Psoas muscle (tissue), 8 donors: ENCODE measurements at regions of chr16 and their contacts with region 1.

Region 1: DNA sequence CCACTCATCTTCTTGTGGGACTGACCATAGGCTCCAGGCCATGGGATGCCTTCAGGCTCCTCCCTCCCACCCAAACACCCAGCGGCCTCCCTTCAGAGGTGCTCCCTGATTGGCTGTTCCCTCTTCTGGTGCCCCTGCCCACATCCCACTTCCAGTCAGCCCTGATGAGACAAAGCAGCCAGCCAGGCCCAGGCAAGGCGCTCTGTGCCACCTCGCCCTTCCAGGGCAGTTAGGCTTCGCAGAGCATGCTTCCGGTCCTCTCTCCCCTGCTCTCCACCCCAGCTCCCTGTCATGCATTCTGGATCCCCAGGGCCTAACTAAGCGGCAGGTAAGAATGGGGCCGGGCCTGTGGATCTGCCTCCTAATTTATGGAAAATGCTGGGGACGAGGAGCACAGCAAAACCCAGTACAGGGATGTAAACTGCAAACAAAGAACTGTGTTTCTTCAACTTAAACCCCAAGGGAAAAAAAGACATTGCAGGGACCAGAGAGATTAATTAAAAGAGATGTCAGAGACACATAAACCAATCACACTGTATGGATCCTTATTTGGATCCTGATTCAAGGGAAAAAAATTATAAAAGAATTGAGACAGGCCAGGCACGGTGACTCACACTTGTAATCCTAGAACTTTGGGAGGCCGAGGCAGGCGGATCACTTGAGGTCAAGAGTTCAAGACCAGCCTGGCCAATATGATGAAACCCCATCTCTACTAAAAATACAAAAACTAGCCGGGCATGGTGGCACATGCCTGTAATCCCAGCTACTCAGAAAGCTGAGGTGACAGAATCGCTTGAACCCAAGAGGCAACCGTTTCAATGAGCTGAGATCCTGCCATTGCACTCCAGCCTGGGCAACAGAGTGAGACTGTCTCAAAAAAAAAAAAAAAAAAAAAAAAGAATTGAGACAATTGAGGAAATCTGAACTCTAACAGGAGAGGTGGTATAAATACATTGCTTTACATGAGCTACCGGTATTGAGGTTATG is 26.0 kb downstream of the ZDHHC7 start:
- DNase-seq: peak; percentile 46 to 81
- ATAC-seq: peak; percentile 68 to 82 (median 79)
- H3K4me3 ChIP-seq: no peak overlapping the region
- H3K27ac ChIP-seq: peak overlapping the region; percentile 86
- H3K4me1 ChIP-seq: peaks cover 50% of the 10 kb centered on the region
- H3K27me3 ChIP-seq: no peaks in the 10 kb centered on the region
- CTCF ChIP-seq: no peak

Region 2: GRCh38 chr16:84851192-84852127 is 133.9 kb before region 1 on chr16:
- intact Hi-C with region 1: no loop called
- DNase-seq: peak in 1 of 2 donors; percentile 38
- ATAC-seq: no peak
- H3K4me3 ChIP-seq: no peak overlapping the region
- H3K27ac ChIP-seq: no peak overlapping the region
- H3K4me1 ChIP-seq: no peaks in the 10 kb centered on the region
- H3K27me3 ChIP-seq: peaks cover 0 to 6% (median 0%) of the 10 kb centered on the region in 3 donors
- CTCF ChIP-seq: no peak

Region 3: GRCh38 chr16:85086347-85087291 is 101.2 kb after region 1 on chr16:
- intact Hi-C with region 1: loop called (anchors 2 to 10 kb)
- DNase-seq: peak; percentile 75 to 81
- ATAC-seq: peak; percentile 49 to 76 (median 72)
- H3K4me3 ChIP-seq: no peak overlapping the region
- H3K27ac ChIP-seq: no peak overlapping the region
- H3K4me1 ChIP-seq: no peaks in the 10 kb centered on the region
- H3K27me3 ChIP-seq: no peaks in the 10 kb centered on the region
- CTCF ChIP-seq: peak; percentile 56

Region 4: DNA sequence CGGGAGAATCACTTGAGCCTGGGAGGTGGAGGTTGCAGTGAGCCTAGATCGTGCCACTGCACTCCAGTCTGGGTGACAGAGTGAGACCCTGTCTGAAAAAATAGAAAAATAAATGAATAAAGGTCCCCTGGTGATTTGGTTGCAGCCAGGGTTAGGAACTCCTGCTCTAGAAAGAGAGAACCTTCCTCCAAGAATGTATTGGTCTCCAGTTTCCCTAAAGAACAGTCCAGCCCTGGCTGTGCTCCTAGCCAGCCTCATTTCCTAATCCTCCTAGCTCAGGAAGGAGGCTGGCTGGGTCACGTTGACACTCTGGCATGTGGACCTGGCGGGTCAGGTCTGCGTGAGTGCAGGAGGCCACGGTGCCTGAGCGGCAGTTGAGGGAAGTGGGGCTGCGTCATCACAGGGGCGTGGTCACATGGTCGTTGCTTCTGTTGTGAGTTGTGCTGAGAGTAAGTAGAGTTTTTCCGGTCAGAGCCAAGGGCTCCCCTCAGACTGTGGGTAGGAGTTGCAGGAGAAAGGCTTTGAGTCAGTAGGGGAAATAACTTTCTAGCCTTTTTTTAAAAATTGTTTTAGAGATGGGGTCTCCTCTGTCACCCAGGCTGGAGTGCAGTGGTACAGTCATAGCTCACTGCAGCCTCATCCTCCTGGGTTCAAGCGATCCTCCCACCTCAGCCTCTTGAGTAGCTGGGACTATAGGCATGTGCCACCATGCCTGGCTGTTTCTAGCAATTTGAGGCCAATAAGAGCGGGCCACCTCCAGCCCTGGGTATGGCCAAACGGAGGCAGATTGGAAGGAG is 320.8 kb after region 1 on chr16:
- intact Hi-C with region 1: no loop called
- DNase-seq: peak; percentile 92 to 96
- ATAC-seq: peak; percentile 77 to 86 (median 78)
- H3K4me3 ChIP-seq: no peak overlapping the region
- H3K27ac ChIP-seq: peak overlapping the region; percentile 77
- H3K4me1 ChIP-seq: peaks cover 92% of the 10 kb centered on the region
- H3K27me3 ChIP-seq: no peaks in the 10 kb centered on the region
- CTCF ChIP-seq: no peak

Region 5: GRCh38 chr16:86002178-86002900 is 1017.0 kb after region 1 on chr16:
- intact Hi-C with region 1: no loop called
- DNase-seq: no peak
- ATAC-seq: no peak
- H3K4me3 ChIP-seq: no peak overlapping the region
- H3K27ac ChIP-seq: no peak overlapping the region
- H3K4me1 ChIP-seq: no peaks in the 10 kb centered on the region
- H3K27me3 ChIP-seq: peaks cover 0 to 2% (median 0%) of the 10 kb centered on the region in 3 donors
- CTCF ChIP-seq: no peak